ENCODE measurements at regions of chr18 and their contacts with region 1.

Region 1: DNA sequence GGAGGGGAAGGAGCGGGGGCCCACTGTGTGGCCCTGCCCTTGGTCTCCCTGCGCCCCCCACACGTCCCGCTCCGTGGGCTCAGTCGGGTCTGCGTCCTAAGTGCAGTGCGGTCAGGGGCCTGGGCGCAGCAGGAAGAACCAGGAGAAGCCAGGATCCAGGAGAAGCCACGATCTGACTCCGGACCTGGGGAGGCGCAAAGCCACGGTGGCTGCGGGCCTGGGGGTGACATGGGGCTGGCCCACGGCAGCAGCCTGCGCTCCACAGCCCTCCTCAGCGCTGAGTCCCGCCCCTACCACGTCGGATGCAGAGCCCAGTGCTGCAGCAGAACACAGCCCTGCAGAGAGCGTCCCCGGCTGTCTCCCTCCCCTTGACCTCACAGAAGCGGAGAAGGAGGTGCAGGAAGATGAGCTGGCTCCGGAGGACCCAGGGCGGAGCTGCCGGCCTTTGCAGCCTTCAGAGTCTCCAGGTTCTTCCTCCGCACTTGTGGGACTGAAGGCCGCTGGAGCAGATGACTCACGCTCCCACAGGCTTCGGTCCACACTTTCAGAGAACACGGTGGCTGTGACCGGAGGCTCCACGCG is 589.2 kb upstream of the SALL3 start:
- DNase-seq: no peak
- ATAC-seq: peak in 1 of 4 donors; percentile 29
- H3K4me3 ChIP-seq: no peak overlapping the region
- H3K27ac ChIP-seq: no peak overlapping the region
- H3K4me1 ChIP-seq: no peaks in the 10 kb centered on the region
- H3K27me3 ChIP-seq: no peaks in the 10 kb centered on the region
- CTCF ChIP-seq: no peak
- POLR2A ChIP-seq: no peak

Region 2: GRCh38 chr18:78330761-78331160 is 59.7 kb before region 1 on chr18:
- intact Hi-C with region 1: loop called (anchors 10 kb)
- DNase-seq: no peak
- ATAC-seq: no peak
- H3K4me3 ChIP-seq: no peak overlapping the region
- H3K27ac ChIP-seq: no peak overlapping the region
- H3K4me1 ChIP-seq: no peaks in the 10 kb centered on the region
- H3K27me3 ChIP-seq: no peaks in the 10 kb centered on the region
- CTCF ChIP-seq: no peak
- POLR2A ChIP-seq: no peak

Measured in right lobe of liver (tissue), 6 donors.